ENCODE measurements at regions of chr15 and their contacts with region 1.

Region 1: GRCh38 chr15:24848050-24848449 is 106.7 kb upstream of the SNRPN start:
- DNase-seq: peak; percentile 25 to 47
- ATAC-seq: peak; percentile 34 to 91 (median 90)
- H3K4me3 ChIP-seq: peak overlapping the region in 8 of 10 donors; percentile 17 to 51 (median 35)
- H3K27ac ChIP-seq: peak overlapping the region in 7 of 10 donors; percentile 33 to 67 (median 60)
- H3K4me1 ChIP-seq: no peaks in the 10 kb centered on the region
- H3K27me3 ChIP-seq: peaks cover 0 to 5% (median 0%) of the 10 kb centered on the region in 7 donors
- CTCF ChIP-seq: no peak

Region 2: DNA sequence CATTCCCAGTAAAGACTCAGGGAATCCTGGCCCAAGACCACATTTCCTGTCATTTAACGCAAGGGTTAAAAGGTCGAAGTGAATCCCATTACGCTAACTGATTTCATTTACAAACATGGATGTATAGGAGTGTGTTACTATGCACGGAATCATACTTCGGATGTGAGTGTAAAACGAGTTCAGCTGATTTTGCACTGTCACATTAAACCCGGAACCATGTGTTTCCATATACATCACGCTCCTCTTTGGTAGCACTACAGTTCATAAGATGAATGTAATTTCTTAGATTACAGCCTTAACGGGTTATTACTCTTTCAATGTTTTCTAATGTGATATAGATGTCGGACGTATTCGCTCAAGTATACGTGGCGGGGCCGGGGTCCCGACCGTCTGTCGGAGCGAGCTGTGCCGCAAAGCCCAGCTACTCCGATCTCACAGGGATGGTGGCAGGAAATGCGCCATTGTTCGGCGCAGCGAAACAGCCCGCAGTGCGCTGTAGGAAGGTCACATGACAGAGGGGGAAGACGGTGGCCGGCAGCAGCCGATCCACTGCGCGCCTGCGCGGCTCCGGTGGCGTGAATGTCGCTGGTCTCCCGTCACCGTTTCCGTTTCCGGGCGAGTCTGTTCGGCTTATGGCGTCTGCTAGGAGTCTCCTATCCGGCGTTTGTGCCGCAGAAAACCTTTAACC is 75.2 kb before region 1 on chr15:
- intact Hi-C with region 1: loop called in 1 of 10 experiments (anchors 10 kb)
- DNase-seq: peak; percentile 69 to 70
- ATAC-seq: peak; percentile 95 to 99 (median 98)
- H3K4me3 ChIP-seq: peak overlapping the region in 9 of 10 donors; percentile 20 to 55 (median 46)
- H3K27ac ChIP-seq: peak overlapping the region in 5 of 10 donors; percentile 31 to 53 (median 49)
- H3K4me1 ChIP-seq: no peaks in the 10 kb centered on the region
- H3K27me3 ChIP-seq: peaks cover 0 to 43% (median 4%) of the 10 kb centered on the region in 7 donors
- CTCF ChIP-seq: no peak

Region 3: DNA sequence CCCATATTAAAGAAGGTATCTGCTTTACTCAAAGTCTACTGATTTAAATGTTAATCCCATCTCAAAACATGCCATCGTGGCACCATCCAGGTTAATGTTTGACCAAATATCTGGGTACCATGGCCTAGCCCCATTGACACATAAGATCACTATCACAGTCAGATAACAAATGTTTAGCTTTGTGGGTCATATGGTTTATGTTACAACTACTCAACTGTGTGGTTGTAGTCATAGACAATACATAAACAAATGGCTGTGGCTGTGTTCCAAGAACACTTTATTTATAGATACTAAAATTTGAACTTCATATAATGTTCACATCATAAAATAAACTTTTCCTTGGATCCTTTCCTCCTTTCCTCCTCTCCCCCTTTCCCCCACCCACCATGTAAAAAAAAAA is 96.9 kb after region 1 on chr15:
- intact Hi-C with region 1: no loop called
- DNase-seq: no peak
- ATAC-seq: no peak
- H3K4me3 ChIP-seq: no peak overlapping the region
- H3K27ac ChIP-seq: no peak overlapping the region
- H3K4me1 ChIP-seq: no peaks in the 10 kb centered on the region
- H3K27me3 ChIP-seq: no peaks in the 10 kb centered on the region
- CTCF ChIP-seq: no peak

Measured in heart right ventricle (tissue), 16 donors.